Lower leg skin (tissue), 4 donors: ENCODE measurements at regions of chr20 and their contacts with region 1.

Region 1: DNA sequence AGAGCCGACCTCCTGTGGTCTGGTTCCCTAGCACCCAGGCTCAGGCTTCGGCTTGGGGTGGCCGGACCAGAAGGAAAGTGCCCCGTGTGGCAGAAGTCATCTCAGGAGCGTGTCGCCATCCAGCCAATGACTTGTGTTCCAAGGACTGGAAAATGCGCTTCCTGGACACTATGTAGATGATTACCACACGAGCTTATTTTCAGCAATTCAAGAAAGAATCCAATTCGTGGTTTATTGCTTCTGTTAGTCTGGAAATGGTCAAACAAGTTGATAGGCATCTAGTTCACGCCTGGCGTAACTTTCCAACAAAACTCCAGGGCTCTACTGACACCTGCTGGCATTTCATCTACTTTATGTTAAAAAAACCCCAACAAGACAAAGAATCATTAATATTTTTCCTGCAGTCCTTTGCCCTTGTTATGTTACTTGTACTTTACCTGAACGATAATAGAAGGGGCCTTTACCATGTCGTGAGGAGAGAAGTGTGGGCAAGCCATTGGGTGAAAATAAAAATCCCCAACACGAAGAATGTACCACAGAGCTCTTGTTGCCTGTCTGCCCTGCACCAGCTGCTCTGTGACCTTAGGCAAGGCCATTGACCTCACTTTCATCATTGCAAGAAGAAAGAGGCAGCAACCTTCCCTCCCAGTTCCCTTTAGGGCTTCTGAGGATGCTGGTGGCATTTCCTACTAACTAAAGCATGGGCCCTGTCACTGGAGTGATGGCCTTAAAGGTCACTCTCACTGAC is 154.7 kb upstream of the LAMP5 start:
- DNase-seq: peak in 1 of 2 donors; percentile 34
- H3K4me3 ChIP-seq: no peak overlapping the region
- CTCF ChIP-seq: no peak
- POLR2A ChIP-seq: no peak

Region 2: GRCh38 chr20:8853805-8854338 is 505.9 kb before region 1 on chr20:
- intact Hi-C with region 1: loop called (anchors 10 kb)
- DNase-seq: peak in 1 of 2 donors; percentile 39
- H3K4me3 ChIP-seq: no peak overlapping the region
- CTCF ChIP-seq: peak in 1 of 3 donors; percentile 48
- POLR2A ChIP-seq: no peak

Region 3: GRCh38 chr20:10793766-10794165 is 1434.0 kb after region 1 on chr20:
- intact Hi-C with region 1: no loop called
- DNase-seq: no peak
- H3K4me3 ChIP-seq: no peak overlapping the region
- CTCF ChIP-seq: no peak
- POLR2A ChIP-seq: no peak